GM10248 (cell line): ENCODE measurements at regions of chr11 and their contacts with region 1.

Region 1: DNA sequence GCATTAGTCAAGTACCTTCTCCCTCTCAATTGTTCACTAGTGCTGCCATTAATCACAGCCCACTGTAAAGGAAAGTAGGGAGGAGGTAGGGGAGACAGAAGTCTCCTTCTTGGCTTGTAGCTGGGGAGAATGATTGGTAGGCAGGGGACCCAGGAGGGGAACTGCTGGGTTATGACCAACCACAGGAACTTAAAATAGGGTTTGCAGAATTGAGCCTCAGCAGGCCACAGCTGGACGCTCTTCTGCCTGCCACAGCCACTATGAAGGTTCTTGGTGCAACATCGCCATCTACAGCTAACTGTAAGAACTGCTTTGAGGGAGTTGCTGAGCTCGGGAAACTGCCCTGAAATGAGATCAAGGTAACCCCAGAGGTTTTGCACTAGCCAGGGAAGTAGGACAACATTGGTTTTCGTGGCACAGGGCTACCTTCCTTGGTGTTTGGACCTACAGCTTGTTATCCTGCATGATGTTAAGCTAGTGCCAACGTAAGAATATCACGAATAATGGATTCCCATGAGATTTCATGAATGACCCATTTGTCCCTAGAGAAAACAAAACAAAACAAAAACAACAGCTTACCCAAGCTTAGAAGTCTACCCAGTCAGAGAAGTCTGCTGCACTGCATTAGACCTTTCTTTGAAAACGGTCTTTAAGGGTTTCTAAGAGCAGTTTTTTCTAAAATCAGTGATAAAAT is 787.1 kb upstream of the API5 start:
- DNase-seq: peak; percentile 38
- CTCF ChIP-seq: peak; percentile 76

Region 2: DNA sequence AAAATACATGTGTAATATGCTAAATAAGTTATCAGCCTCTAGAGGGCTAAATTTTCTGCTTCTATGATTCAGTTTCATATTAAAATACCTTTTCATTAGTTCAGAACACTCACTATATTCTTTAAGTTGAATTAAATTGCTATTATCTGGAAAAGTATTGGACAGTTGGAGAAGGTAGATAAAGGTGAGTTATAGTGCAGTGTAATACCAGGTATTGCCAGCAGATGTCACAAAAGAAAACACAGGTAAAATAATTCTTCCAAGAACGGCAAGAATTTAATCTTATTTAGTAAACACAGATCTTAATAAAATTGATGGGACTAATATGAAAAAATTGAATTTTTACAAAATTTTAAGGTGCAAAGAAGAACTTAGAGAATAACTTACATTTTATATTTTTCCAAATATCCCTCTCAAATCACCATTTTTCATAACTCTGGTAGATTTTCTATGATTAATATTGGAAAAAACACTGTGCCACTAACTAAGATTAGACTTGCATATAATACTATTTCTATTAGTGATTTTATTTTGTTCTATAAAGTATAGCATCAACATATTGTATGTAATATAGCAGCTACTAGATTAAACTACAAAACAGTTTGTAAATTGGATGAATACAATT is 1063.5 kb before region 1 on chr11:
- CTCF ChIA-PET with region 1: interaction called, 39 read pairs
- POLR2A ChIA-PET with region 1: no interaction called
- DNase-seq: no peak
- CTCF ChIP-seq: peak; percentile 62

Region 3: GRCh38 chr11:42536611-42537360 is 12.1 kb after region 1 on chr11:
- CTCF ChIA-PET with region 1: interaction called, 14 read pairs
- POLR2A ChIA-PET with region 1: no interaction called
- DNase-seq: no peak
- CTCF ChIP-seq: no peak

Region 4: GRCh38 chr11:42901084-42901483 is 376.4 kb after region 1 on chr11:
- CTCF ChIA-PET with region 1: no interaction called
- POLR2A ChIA-PET with region 1: no interaction called
- DNase-seq: no peak
- CTCF ChIP-seq: no peak